ENCODE measurements at regions of chr3 and their contacts with region 1.

Region 1: GRCh38 chr3:46297658-46298463 is 55.6 kb downstream of the CCR3 start:
- DNase-seq: no peak
- H3K4me3 Mint-ChIP-seq: no peak overlapping the region
- H3K27ac Mint-ChIP-seq: no peak overlapping the region
- H3K4me1 Mint-ChIP-seq: peaks cover 78% of the 10 kb centered on the region
- H3K27me3 Mint-ChIP-seq: peaks cover 11% of the 10 kb centered on the region

Region 2: GRCh38 chr3:45864760-45865519 is 432.9 kb before region 1 on chr3:
- CTCF ChIA-PET with region 1: no interaction called
- intact Hi-C with region 1: loop called (anchors 1 kb)
- DNase-seq: peak; percentile 48
- H3K4me3 Mint-ChIP-seq: no peak overlapping the region
- H3K27ac Mint-ChIP-seq: no peak overlapping the region
- H3K4me1 Mint-ChIP-seq: peaks cover 44% of the 10 kb centered on the region
- H3K27me3 Mint-ChIP-seq: peaks cover 53% of the 10 kb centered on the region

Region 3: DNA sequence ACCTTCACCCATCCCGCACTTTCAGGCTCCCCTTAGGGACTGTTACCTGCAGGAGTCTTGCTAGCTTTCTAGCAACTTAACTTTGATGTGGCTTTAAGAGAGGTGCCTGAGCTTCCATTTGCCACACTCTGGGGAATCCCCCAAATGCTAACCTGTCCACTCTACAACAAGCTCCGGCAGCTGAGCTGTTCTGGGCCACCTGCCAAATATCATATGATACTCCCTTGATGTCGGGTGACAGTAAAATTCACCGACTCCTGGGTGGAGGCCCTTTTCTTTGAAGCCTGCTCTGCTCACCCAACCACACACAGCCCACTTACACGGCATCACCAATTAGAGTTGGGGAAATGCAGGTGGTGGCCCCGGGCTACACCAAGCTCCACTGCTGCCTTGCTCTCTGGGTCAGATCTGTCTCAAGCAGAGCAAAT is 232.6 kb before region 1 on chr3:
- CTCF ChIA-PET with region 1: interaction called, 7 read pairs
- intact Hi-C with region 1: loop called (anchors 1 kb)
- DNase-seq: peak; percentile 89
- H3K4me3 Mint-ChIP-seq: no peak overlapping the region
- H3K27ac Mint-ChIP-seq: no peak overlapping the region
- H3K4me1 Mint-ChIP-seq: peaks cover 67% of the 10 kb centered on the region
- H3K27me3 Mint-ChIP-seq: peaks cover 49% of the 10 kb centered on the region

Region 4: GRCh38 chr3:46276502-46277099 is 21.3 kb before region 1 on chr3:
- CTCF ChIA-PET with region 1: interaction called, 6 read pairs
- intact Hi-C with region 1: loop called (anchors 1 kb)
- DNase-seq: peak; percentile 87
- H3K4me3 Mint-ChIP-seq: no peak overlapping the region
- H3K27ac Mint-ChIP-seq: no peak overlapping the region
- H3K4me1 Mint-ChIP-seq: peaks cover 20% of the 10 kb centered on the region
- H3K27me3 Mint-ChIP-seq: peaks cover 14% of the 10 kb centered on the region

Region 5: DNA sequence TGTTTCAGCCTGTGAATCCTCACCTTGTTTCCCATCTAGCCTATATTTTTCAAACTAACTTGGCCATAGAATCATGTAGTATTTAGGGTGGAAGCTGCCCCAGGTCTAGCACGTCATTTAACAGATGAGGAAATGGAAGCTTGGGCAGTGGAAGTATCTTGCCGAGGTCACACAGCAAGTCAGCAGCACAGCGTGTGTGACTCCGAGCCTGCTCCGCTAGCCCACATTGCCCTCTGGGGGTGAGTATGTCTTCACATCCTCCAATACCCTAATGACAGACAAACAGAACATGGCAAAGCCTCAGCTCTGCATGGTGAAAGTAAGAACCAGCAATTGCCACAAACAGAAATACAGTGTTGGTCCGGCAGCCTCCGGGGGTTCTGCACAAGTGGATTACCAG is 70.7 kb after region 1 on chr3:
- CTCF ChIA-PET with region 1: interaction called, 16 read pairs
- intact Hi-C with region 1: loop called (anchors 1 kb)
- DNase-seq: peak; percentile 75
- H3K4me3 Mint-ChIP-seq: no peak overlapping the region
- H3K27ac Mint-ChIP-seq: no peak overlapping the region
- H3K4me1 Mint-ChIP-seq: peaks cover 21% of the 10 kb centered on the region
- H3K27me3 Mint-ChIP-seq: peaks cover 16% of the 10 kb centered on the region

Measured in activated naive CD4-positive, alpha-beta T cell treated with anti-CD3 and anti-CD28 coated beads for 36 hours (primary cell).